Naive thymus-derived CD4-positive, alpha-beta T cell (primary cell): ENCODE measurements at regions of chr10 and their contacts with region 1.

Region 1: GRCh38 chr10:7484456-7485243 is 73.8 kb upstream of the SFMBT2 start:
- DNase-seq: peak in 8 of 9 donors; percentile 49 to 89 (median 82)
- ATAC-seq: peak; percentile 92
- H3K4me3 ChIP-seq: peak overlapping the region; percentile 34
- H3K4me3 Mint-ChIP-seq: peak overlapping the region; percentile 54 to 85 (median 78)
- H3K27ac ChIP-seq: peak overlapping the region; percentile 73
- H3K27ac Mint-ChIP-seq: peak overlapping the region; percentile 93 to 100 (median 99)
- H3K4me1 ChIP-seq: peaks cover 63 to 75% of the 10 kb centered on the region in 2 donors
- H3K4me1 Mint-ChIP-seq: peaks cover 67 to 96% (median 94%) of the 10 kb centered on the region in 7 donors
- H3K27me3 ChIP-seq: no peaks in the 10 kb centered on the region
- H3K27me3 Mint-ChIP-seq: no peaks in the 10 kb centered on the region

Region 2: GRCh38 chr10:6191147-6191546 is 1293.5 kb before region 1 on chr10:
- CTCF ChIA-PET with region 1: no interaction called
- POLR2A ChIA-PET with region 1: no interaction called
- intact Hi-C with region 1: loop called in 1 of 2 experiments (anchors 5 kb)
- DNase-seq: no peak
- ATAC-seq: no peak
- H3K4me3 ChIP-seq: no peak overlapping the region
- H3K4me3 Mint-ChIP-seq: no peak overlapping the region
- H3K27ac ChIP-seq: no peak overlapping the region
- H3K27ac Mint-ChIP-seq: no peak overlapping the region
- H3K4me1 ChIP-seq: peaks cover 0 to 5% of the 10 kb centered on the region in 2 donors
- H3K4me1 Mint-ChIP-seq: peaks cover 27 to 50% (median 35%) of the 10 kb centered on the region in 7 donors
- H3K27me3 ChIP-seq: no peaks in the 10 kb centered on the region
- H3K27me3 Mint-ChIP-seq: no peaks in the 10 kb centered on the region

Region 3: DNA sequence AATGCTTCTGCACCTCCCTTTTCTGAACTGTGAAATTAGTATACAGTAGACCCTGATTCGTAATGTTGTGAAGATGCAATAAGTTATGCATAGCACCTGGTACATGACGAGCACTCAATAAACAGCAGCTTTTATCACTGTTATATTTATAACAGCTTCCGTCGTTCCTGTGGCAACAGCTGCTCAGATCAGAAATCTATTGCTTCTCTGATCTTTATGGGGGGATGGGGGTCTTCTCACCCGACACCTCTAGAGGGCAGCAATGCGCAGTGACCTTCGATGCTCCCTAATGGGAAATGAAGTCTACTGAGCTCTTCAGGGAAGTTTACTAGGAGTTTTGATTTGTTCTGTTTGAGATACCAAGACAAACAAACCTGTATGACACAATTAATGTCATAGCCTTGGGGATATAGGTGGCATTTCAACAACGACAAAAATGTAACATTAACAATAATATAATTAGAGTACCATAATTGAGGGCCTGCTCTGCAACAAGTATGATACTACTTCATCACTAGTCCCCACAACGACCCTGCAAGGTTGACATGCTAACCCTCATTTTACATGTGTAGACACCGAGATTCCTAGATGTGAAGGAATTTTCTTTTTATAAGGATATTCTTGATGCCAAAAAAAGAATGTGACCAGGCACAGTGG is 363.4 kb before region 1 on chr10:
- CTCF ChIA-PET with region 1: no interaction called
- POLR2A ChIA-PET with region 1: no interaction called
- intact Hi-C with region 1: loop called in 1 of 2 experiments (anchors 1 kb)
- DNase-seq: peak; percentile 54 to 86 (median 79)
- ATAC-seq: peak; percentile 97
- H3K4me3 ChIP-seq: no peak overlapping the region
- H3K4me3 Mint-ChIP-seq: peak overlapping the region in 1 of 10 donors; percentile 42
- H3K27ac ChIP-seq: no peak overlapping the region
- H3K27ac Mint-ChIP-seq: peak overlapping the region; percentile 36 to 97 (median 85)
- H3K4me1 ChIP-seq: no peaks in the 10 kb centered on the region
- H3K4me1 Mint-ChIP-seq: peaks cover 6 to 13% (median 8%) of the 10 kb centered on the region in 7 donors
- H3K27me3 ChIP-seq: no peaks in the 10 kb centered on the region
- H3K27me3 Mint-ChIP-seq: peaks cover 0 to 44% (median 0%) of the 10 kb centered on the region in 5 donors

Region 4: DNA sequence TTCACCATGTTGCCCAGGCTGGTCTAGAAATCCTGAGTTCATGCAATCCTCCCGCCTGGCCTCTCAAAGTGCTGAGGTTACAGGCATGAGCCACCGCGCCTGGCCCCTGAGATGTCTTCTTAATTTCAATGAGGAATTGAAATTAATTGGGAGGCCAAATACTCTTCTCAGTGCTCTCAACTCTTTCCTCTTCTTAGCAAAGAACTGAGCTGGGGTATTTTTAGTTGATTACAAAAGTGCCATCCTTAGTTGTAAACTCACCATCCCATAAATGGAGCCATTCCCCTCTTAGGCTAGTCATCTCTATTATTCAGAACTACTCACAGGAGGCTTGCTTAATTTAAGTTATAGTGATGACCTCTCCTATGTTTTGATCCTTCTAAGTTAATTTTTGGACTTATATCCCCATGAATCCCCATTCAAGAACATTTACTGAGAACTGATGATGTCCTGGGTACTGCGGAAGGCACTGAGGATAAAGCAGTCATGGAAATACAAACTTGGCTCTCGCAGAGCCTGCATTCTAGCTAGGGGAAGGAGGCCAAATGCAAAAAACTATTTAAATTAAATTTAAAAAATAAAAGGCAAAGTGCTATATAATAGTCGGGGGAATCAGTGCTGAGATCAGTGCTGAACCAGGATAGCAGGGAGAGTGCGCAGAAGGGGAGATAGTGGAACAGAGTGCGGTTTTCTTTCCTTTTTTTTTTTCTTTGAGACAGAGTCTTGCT is 219.1 kb before region 1 on chr10:
- CTCF ChIA-PET with region 1: no interaction called
- POLR2A ChIA-PET with region 1: no interaction called
- intact Hi-C with region 1: loop called (anchors 5 to 10 kb)
- DNase-seq: no peak
- ATAC-seq: no peak
- H3K4me3 ChIP-seq: no peak overlapping the region
- H3K4me3 Mint-ChIP-seq: no peak overlapping the region
- H3K27ac ChIP-seq: no peak overlapping the region
- H3K27ac Mint-ChIP-seq: peak overlapping the region in 5 of 9 donors; percentile 36 to 84 (median 76)
- H3K4me1 ChIP-seq: peaks cover 6 to 13% of the 10 kb centered on the region in 2 donors
- H3K4me1 Mint-ChIP-seq: peaks cover 16 to 52% (median 38%) of the 10 kb centered on the region in 7 donors
- H3K27me3 ChIP-seq: no peaks in the 10 kb centered on the region
- H3K27me3 Mint-ChIP-seq: no peaks in the 10 kb centered on the region

Region 5: DNA sequence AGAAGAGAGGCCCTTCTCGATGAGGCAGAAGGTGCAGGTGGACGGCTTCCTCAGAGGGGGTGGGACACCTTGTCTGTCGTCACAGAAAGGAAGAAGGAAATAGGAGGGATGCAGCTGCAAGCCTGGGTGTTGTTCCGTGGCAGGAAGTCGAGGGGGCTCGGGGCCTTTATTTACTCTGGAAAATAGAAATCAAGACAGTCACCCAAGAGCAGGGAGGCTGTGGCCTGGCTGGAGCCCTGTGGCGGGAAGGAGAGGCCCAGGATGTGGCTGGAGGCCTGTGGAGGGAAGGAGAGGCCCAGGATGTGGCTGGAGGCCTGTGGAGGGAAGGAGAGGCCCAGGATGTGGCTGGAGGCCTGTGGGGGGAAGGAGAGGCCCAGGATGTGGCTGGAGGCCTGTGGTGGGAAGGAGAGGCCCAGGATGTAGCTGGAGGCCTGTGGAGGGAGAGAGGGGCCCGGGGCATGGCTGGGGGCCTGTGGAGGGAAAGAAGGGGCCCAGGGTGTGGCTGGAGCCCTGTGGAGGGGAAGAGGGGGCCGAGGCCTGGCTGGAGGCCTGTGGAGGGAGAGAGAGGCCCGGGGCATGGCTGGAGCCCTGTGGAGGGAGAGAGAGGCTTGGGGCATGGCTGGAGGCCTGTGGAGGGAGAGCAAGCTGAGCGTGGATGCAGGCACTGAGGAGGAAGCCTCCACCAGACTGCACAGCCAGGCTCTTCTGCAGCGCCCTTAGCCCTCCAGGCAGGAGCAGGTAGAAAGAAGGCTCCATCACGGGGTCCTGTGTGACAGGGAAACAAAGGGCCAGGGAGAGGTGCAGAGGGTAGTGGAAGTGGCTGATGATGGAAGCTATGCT is 23.5 kb after region 1 on chr10:
- CTCF ChIA-PET with region 1: interaction called, 6 read pairs
- POLR2A ChIA-PET with region 1: interaction called, 10 read pairs
- intact Hi-C with region 1: loop called (anchors 1 kb)
- DNase-seq: peak in 7 of 9 donors; percentile 26 to 66 (median 51)
- ATAC-seq: peak; percentile 52
- H3K4me3 ChIP-seq: no peak overlapping the region
- H3K4me3 Mint-ChIP-seq: peak overlapping the region; percentile 7 to 90 (median 66)
- H3K27ac ChIP-seq: peak overlapping the region; percentile 64
- H3K27ac Mint-ChIP-seq: peak overlapping the region; percentile 84 to 97 (median 95)
- H3K4me1 ChIP-seq: peaks cover 24 to 34% of the 10 kb centered on the region in 2 donors
- H3K4me1 Mint-ChIP-seq: peaks cover 44 to 74% (median 60%) of the 10 kb centered on the region in 7 donors
- H3K27me3 ChIP-seq: no peaks in the 10 kb centered on the region
- H3K27me3 Mint-ChIP-seq: no peaks in the 10 kb centered on the region

Region 6: GRCh38 chr10:7857262-7857661 is 372.6 kb after region 1 on chr10:
- CTCF ChIA-PET with region 1: no interaction called
- POLR2A ChIA-PET with region 1: no interaction called
- intact Hi-C with region 1: no loop called
- DNase-seq: no peak
- ATAC-seq: no peak
- H3K4me3 ChIP-seq: no peak overlapping the region
- H3K4me3 Mint-ChIP-seq: no peak overlapping the region
- H3K27ac ChIP-seq: no peak overlapping the region
- H3K27ac Mint-ChIP-seq: peak overlapping the region in 2 of 9 donors; percentile 28 to 61
- H3K4me1 ChIP-seq: peaks cover 0 to 4% of the 10 kb centered on the region in 2 donors
- H3K4me1 Mint-ChIP-seq: peaks cover 5 to 56% (median 42%) of the 10 kb centered on the region in 7 donors
- H3K27me3 ChIP-seq: peaks cover 0 to 3% of the 10 kb centered on the region in 2 donors
- H3K27me3 Mint-ChIP-seq: no peaks in the 10 kb centered on the region

Region 7: GRCh38 chr10:7986851-7987250 is 502.2 kb after region 1 on chr10:
- CTCF ChIA-PET with region 1: no interaction called
- POLR2A ChIA-PET with region 1: no interaction called
- intact Hi-C with region 1: no loop called
- DNase-seq: no peak
- ATAC-seq: no peak
- H3K4me3 ChIP-seq: no peak overlapping the region
- H3K4me3 Mint-ChIP-seq: no peak overlapping the region
- H3K27ac ChIP-seq: no peak overlapping the region
- H3K27ac Mint-ChIP-seq: no peak overlapping the region
- H3K4me1 ChIP-seq: no peaks in the 10 kb centered on the region
- H3K4me1 Mint-ChIP-seq: peaks cover 0 to 3% (median 0%) of the 10 kb centered on the region in 7 donors
- H3K27me3 ChIP-seq: no peaks in the 10 kb centered on the region
- H3K27me3 Mint-ChIP-seq: no peaks in the 10 kb centered on the region